ENCODE measurements at regions of chr16 and their contacts with region 1.

Region 1: DNA sequence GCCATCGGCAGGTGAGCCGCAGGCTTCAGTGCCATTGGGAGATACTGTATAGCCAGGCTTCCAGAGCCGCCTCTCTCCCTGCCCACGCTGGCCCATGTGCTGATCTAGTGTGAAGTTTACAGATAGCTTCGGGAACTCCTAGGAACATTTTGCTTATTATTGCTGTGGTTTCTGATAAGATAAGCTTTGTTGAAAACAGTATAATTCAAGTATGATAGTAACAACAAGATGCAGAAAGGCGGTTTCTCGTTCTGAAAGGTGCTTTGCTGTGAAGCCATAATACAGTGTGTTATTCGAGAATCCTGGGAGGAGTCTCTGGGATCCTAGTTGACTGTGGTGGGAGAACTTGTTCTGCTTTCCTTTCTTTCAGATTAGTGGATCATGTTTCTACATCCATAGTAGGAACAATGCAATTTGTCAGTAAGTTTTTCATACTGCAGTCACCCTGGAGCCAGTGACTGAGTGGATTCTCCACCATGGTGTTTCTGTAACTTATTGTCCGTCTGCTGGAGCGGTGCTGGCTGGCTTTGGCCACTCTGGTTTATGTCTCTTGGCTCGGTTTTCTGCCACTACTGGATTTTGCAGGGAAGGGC is 31.5 kb downstream of the RAB11FIP3 start:
- DNase-seq: peak; percentile 10
- H3K4me3 ChIP-seq: no peak overlapping the region
- H3K27ac ChIP-seq: no peak overlapping the region
- H3K27me3 ChIP-seq: no peaks in the 10 kb centered on the region
- CTCF ChIP-seq: no peak

Region 2: DNA sequence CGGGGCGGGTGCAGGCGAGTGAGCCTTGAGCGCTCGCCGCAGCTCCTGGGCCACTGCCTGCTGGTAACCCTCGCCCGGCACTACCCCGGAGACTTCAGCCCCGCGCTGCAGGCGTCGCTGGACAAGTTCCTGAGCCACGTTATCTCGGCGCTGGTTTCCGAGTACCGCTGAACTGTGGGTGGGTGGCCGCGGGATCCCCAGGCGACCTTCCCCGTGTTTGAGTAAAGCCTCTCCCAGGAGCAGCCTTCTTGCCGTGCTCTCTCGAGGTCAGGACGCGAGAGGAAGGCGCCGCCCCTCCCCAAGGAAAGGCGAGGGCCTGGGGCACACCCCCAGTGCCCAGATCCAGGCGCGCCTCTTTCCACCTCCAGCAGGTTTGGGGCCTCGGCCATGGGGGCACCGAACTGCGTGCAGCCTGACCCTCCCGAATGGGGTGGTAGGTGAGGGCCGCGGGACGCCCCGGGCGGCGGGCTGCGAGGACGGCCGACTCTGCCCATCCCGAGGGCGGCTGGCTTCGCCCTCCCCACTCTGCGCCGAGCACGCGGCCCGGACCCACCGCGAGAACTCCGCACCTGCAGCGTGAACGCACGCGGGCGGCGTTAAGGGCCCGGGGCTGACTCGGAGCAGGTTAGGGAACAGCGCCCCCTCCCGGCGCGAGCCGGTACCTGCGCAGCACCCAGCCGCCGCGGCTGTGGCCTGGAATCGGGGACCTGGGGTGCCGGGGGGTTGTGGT is 275.9 kb before region 1 on chr16:
- in situ Hi-C with region 1: no loop called
- DNase-seq: peak; percentile 55
- H3K4me3 ChIP-seq: peak overlapping the region; percentile 15
- H3K27ac ChIP-seq: no peak overlapping the region
- H3K27me3 ChIP-seq: peaks cover 26% of the 10 kb centered on the region
- CTCF ChIP-seq: peak; percentile 83

Region 3: GRCh38 chr16:508884-509736 is 52.1 kb after region 1 on chr16:
- in situ Hi-C with region 1: loop called (anchors 10 kb)
- DNase-seq: peak; percentile 69
- H3K4me3 ChIP-seq: no peak overlapping the region
- H3K27ac ChIP-seq: peak overlapping the region; percentile 43
- H3K27me3 ChIP-seq: no peaks in the 10 kb centered on the region
- CTCF ChIP-seq: no peak